ENCODE measurements at regions of chr5 and their contacts with region 1.

Region 1: GRCh38 chr5:93782978-93783377 is 41.6 kb upstream of the POU5F2 start:
- DNase-seq: no peak
- H3K27ac ChIP-seq: no peak overlapping the region
- CTCF ChIP-seq: no peak

Region 2: GRCh38 chr5:93800988-93801811 is 18.2 kb after region 1 on chr5:
- CTCF ChIA-PET with region 1: interaction called, 10 read pairs
- POLR2A ChIA-PET with region 1: interaction called, 3 read pairs
- DNase-seq: peak; percentile 37
- H3K27ac ChIP-seq: no peak overlapping the region
- CTCF ChIP-seq: peak; percentile 81

Measured in RWPE1 (cell line).